Prostate gland (tissue), 2 donors: ENCODE measurements at regions of chr7 and their contacts with region 1.

Region 1: GRCh38 chr7:131004371-131004770 is 270.4 kb upstream of the KLF14 start:
- DNase-seq: no peak
- H3K4me3 ChIP-seq: no peak overlapping the region
- H3K27ac ChIP-seq: no peak overlapping the region
- H3K4me1 ChIP-seq: peaks cover 9% of the 10 kb centered on the region
- H3K27me3 ChIP-seq: no peaks in the 10 kb centered on the region
- CTCF ChIP-seq: no peak
- POLR2A ChIP-seq: no peak

Region 2: DNA sequence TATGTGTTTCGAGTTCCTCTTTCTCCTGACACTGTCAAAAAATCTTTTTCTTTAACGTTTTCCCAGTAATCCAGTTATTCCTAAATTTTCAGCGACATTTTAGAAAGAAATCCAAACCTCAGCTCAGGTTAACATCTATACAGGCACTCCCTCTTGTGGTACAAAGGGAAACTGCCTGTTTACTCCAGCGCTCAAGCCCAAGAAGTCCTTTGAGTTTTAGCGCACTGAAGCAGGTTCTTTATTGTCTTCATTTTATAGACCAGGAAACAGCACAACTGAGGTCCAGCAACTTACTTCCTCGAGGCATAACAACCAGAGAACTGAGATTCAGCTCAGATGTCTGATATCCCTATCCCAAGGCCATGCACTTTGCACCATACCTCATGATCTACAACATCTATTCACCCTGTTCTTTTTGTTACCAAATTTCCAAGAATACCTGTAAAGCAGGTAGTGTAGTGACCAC is 36.1 kb after region 1 on chr7:
- intact Hi-C with region 1: loop called (anchors 5 kb)
- DNase-seq: peak; percentile 68
- H3K4me3 ChIP-seq: no peak overlapping the region
- H3K27ac ChIP-seq: peak overlapping the region; percentile 6 to 9
- H3K4me1 ChIP-seq: no peaks in the 10 kb centered on the region
- H3K27me3 ChIP-seq: no peaks in the 10 kb centered on the region
- CTCF ChIP-seq: peak; percentile 82 to 91 (median 88)
- POLR2A ChIP-seq: no peak

Region 3: GRCh38 chr7:131302876-131303707 is 298.7 kb after region 1 on chr7:
- intact Hi-C with region 1: no loop called
- DNase-seq: peak; percentile 57
- H3K4me3 ChIP-seq: no peak overlapping the region
- H3K27ac ChIP-seq: peak overlapping the region; percentile 33 to 44
- H3K4me1 ChIP-seq: peaks cover 4% of the 10 kb centered on the region
- H3K27me3 ChIP-seq: no peaks in the 10 kb centered on the region
- CTCF ChIP-seq: peak; percentile 40 to 68 (median 60)
- POLR2A ChIP-seq: no peak